Activated T-helper 1 cell treated with anti-CD3 and anti-CD28 coated beads, Interleukin-12 subunit alpha, Interleukin-12 subunit beta, Interleukin-2, Interleukin-4 antibody, amounts not matched to agents 30 ng/mL and 10 ng/mL and 1 ng/mL, durations not matched to agents 14 hours and 24 hours and 36 hours (primary cell): ENCODE measurements at regions of chr7 and their contacts with region 1.

Region 1: GRCh38 chr7:99386584-99387238 is 12.2 kb downstream of the ARPC1B start:
- DNase-seq: peak; percentile 22
- H3K4me3 Mint-ChIP-seq: no peak overlapping the region
- H3K27ac Mint-ChIP-seq: no peak overlapping the region
- H3K4me1 Mint-ChIP-seq: peaks cover 8% of the 10 kb centered on the region
- H3K27me3 Mint-ChIP-seq: no peaks in the 10 kb centered on the region

Region 2: DNA sequence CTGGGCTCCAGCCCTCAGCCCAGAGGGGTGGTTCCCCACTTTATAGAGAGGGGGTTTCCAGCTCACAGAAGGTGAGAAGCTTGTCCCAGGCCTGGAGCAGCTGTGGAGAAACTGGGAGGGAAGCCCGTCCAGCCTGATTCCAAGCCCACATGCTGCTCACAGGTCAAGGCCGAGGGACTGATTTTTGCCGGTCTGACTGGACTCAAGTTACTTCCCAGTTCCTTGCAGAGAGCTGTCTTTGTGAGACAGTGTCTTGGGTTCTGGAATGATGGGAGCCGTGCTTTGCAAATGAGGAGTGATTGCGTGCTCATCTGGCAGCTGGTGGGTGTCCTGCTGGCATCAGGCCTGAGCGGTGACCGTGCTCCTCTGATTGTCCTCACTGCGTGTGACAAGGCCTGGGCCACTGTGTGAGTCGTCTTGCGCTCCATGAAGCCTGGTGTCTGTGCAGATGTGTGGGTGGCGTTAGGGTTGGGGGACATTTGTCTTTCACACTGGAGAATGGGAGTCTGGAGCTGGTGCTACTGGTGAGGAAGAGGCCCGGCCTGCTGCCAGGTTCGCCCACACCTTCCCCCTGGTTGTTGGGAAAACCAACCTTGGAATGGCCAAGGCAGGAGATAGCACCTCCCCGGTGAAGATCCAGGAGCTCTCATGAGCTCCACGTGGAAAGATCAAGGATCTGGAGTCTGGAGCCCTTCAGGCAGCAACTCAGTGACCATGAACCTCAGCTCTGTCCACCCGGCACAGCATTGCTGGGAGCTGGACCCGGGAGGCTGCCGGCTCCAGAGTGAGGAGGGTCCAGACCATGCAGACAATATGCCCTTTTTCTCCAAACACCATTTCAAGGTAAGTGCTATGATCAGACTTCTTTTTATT is 372.4 kb before region 1 on chr7:
- intact Hi-C with region 1: no loop called
- DNase-seq: no peak
- H3K4me3 Mint-ChIP-seq: no peak overlapping the region
- H3K27ac Mint-ChIP-seq: no peak overlapping the region
- H3K4me1 Mint-ChIP-seq: peaks cover 5% of the 10 kb centered on the region
- H3K27me3 Mint-ChIP-seq: no peaks in the 10 kb centered on the region

Region 3: DNA sequence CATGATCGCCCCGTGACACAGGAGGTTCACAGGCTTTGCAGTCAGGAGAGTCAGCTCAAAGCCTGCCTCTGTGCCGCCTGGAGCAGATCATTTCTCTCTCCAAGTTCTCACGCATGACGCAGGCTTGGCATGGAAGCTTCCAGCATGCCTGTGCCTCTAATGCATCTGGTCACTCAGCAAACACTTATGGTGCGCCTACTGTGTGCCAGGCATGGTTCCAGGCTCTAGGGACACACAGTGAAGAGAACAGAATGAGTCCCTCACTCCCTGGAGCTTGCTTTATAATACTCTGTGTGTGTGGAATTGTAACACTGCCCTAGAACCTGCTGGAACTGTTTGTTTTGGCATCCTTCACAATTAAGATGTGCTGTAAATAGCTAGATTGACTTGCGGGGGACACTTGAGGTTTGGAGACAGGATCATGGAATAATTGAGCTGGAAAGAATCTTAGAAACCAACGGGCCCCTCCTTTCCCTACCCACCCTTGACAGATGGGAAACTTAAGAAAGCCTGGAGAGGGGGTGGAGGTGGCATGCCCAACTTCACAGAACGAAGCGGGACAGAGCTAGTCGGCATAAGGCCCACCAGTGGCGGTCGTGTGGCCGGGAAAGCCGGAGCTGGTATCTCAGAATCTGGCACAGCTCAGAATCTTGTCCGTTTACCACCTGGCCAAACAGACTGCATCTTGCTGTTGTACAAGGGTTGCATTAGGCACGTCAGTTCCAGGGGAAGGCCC is 118.7 kb before region 1 on chr7:
- intact Hi-C with region 1: no loop called
- DNase-seq: no peak
- H3K4me3 Mint-ChIP-seq: no peak overlapping the region
- H3K27ac Mint-ChIP-seq: no peak overlapping the region
- H3K4me1 Mint-ChIP-seq: no peaks in the 10 kb centered on the region
- H3K27me3 Mint-ChIP-seq: peaks cover 2% of the 10 kb centered on the region

Region 4: DNA sequence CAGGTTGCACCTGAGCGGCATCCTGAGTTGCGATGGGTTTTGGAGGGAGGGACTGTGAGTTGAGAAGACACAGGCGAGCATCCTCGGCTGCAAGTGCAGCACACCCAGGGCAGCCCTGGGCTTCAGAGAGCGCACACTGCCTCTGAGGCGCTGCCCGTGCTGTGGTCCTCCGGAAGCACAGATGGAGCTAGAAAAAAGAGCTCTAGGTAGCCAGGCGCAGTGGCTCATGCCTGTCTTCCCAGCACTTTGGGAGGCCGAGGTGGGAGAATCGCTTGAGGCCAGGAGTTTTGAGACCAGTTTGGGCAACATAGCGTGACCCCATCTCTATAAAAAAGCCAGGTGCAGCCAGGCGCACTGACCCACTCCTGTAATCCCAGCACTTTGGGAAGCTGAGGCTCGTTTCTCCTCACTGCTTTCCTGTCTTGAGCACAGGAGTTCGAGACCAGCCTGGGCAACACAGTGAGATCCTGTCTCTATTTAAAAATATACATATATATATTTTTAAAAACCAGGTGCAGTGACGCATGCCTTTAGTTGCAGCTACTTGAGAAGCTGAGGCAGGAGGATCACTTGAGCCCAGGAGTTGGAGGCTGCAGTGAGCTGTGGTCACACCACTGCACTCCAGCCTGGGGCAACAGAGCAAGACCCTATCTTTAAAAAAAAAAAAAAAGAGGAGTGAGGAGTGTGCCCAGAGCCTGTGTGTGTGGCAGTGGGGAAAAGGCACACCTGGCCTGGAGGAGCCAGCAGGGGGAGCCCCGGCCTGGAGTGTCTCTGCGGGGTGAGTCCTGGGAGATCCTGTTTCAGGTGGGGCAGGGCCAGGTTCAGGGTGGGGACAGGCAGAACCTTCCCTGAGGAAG is 21.5 kb before region 1 on chr7:
- intact Hi-C with region 1: loop called (anchors 1 kb)
- DNase-seq: peak; percentile 49
- H3K4me3 Mint-ChIP-seq: no peak overlapping the region
- H3K27ac Mint-ChIP-seq: no peak overlapping the region
- H3K4me1 Mint-ChIP-seq: peaks cover 11% of the 10 kb centered on the region
- H3K27me3 Mint-ChIP-seq: no peaks in the 10 kb centered on the region

Region 5: GRCh38 chr7:99447943-99448342 is 61.2 kb after region 1 on chr7:
- intact Hi-C with region 1: no loop called
- DNase-seq: no peak
- H3K4me3 Mint-ChIP-seq: no peak overlapping the region
- H3K27ac Mint-ChIP-seq: no peak overlapping the region
- H3K4me1 Mint-ChIP-seq: peaks cover 5% of the 10 kb centered on the region
- H3K27me3 Mint-ChIP-seq: no peaks in the 10 kb centered on the region